Activated CD4-positive, alpha-beta memory T cell treated with anti-CD3 and anti-CD28 coated beads for 36 hours (primary cell): ENCODE measurements at regions of chr17 and their contacts with region 1.

Region 1: DNA sequence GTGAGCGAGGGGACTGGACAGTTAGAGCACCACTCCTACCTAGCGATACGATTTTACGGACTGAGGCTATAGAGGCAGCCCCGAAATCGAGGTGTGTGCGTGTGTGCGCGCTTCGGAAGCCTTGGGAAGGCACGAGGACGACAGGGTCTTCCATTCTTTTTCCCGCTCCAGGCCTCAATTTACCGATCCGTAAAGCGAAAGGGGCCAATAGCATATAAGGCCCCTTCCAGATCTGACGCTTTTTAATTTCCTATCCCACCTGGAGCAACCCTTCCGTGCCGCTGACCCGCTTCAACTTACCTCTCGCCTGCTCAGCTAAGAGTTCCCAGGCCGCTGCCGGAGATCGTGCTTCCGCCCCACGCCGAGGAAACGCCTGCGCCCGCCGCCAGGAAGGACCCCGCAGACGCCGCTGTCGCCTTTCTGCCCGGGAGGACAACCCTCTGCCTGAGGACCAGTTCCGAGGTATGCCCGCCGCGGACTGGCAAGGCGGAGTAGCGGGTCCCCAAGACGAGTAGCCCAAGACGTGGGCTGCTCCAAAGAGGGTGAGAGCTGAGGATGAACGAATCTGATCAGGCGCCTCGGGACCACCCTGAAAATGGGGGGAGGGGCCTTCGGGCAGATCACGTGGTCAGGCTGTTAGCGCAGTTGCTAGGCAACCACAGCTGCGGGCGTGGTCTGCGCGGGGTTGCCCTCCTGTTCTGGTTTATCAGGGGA is at the start of gene EFTUD2:
- DNase-seq: peak; percentile 94
- H3K4me3 Mint-ChIP-seq: peak within 1 kb of the TSS; percentile 87
- H3K27ac Mint-ChIP-seq: peak within 1 kb of the TSS; percentile 99
- H3K4me1 Mint-ChIP-seq: peaks cover 22% of the 10 kb centered on the region
- H3K27me3 Mint-ChIP-seq: no peaks in the 10 kb centered on the region
- total RNA-seq, gene EFTUD2: 162 to 171 TPM

Region 2: GRCh38 chr17:44708401-44709181 is 190.6 kb before region 1 on chr17 and contains the start of gene DBF4B:
- CTCF ChIA-PET with region 1: no interaction called
- POLR2A ChIA-PET with region 1: no interaction called
- intact Hi-C with region 1: loop called (anchors 1 kb)
- DNase-seq: peak; percentile 89
- H3K4me3 Mint-ChIP-seq: no peak within 1 kb of the TSS
- H3K27ac Mint-ChIP-seq: no peak within 1 kb of the TSS
- H3K4me1 Mint-ChIP-seq: peaks cover 5% of the 10 kb centered on the region
- H3K27me3 Mint-ChIP-seq: peaks cover 4% of the 10 kb centered on the region
- total RNA-seq, gene DBF4B: 25.9 to 27.9 TPM

Region 3: GRCh38 chr17:44878627-44879221 is 20.5 kb before region 1 on chr17:
- CTCF ChIA-PET with region 1: interaction called, 10 read pairs
- POLR2A ChIA-PET with region 1: no interaction called
- intact Hi-C with region 1: no loop called
- DNase-seq: peak; percentile 24
- H3K4me3 Mint-ChIP-seq: no peak overlapping the region
- H3K27ac Mint-ChIP-seq: no peak overlapping the region
- H3K4me1 Mint-ChIP-seq: no peaks in the 10 kb centered on the region
- H3K27me3 Mint-ChIP-seq: no peaks in the 10 kb centered on the region

Region 4: GRCh38 chr17:44911133-44912001 is 12.1 kb after region 1 on chr17:
- CTCF ChIA-PET with region 1: interaction called, 21 read pairs
- POLR2A ChIA-PET with region 1: interaction called, 3 read pairs
- intact Hi-C with region 1: no loop called
- DNase-seq: peak; percentile 70
- H3K4me3 Mint-ChIP-seq: peak overlapping the region; percentile 16
- H3K27ac Mint-ChIP-seq: no peak overlapping the region
- H3K4me1 Mint-ChIP-seq: peaks cover 6% of the 10 kb centered on the region
- H3K27me3 Mint-ChIP-seq: peaks cover 24% of the 10 kb centered on the region